PC-9 (cell line): ENCODE measurements at regions of chr14 and their contacts with region 1.

Region 1: DNA sequence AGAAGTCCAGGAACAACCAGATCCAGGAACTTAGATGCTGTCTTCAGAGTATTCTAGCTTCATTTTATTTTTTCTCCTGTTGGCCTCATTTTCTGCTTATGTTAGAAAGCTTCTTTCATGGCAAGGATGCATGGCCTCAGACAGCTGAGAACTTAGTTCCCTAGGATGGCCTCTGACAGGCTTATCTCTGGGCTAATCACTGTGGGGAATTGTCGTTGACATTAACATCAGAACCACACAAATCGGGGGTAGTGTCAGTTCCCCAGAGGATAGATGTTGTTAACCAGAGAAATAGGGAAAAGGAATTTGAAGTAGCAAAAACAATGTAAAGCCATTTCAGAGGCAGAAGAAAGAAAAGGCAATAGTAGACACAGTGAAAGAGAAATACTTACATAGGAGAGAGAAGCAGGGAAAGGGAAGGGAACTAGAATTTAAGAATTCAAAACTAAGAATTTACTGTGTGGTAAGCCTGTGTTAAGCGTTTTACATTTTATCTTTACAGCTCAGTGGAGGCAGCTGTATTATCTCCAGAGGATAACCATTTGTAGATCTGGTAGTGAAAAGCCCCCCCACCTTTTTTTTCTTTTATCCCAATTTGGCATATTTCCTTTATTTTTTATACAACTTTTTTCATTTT is 21.8 kb downstream of the FUT8 start:
- DNase-seq: peak in 1 of 2 experiments; percentile 32
- H3K4me3 ChIP-seq: no peak overlapping the region
- H3K27ac ChIP-seq: peak overlapping the region; percentile 2; the same call in 1 of the 2 replicates
- H3K4me1 ChIP-seq: peaks cover 20% of the 10 kb centered on the region
- H3K27me3 ChIP-seq: no peaks in the 10 kb centered on the region
- CTCF ChIP-seq: no peak

Region 2: DNA sequence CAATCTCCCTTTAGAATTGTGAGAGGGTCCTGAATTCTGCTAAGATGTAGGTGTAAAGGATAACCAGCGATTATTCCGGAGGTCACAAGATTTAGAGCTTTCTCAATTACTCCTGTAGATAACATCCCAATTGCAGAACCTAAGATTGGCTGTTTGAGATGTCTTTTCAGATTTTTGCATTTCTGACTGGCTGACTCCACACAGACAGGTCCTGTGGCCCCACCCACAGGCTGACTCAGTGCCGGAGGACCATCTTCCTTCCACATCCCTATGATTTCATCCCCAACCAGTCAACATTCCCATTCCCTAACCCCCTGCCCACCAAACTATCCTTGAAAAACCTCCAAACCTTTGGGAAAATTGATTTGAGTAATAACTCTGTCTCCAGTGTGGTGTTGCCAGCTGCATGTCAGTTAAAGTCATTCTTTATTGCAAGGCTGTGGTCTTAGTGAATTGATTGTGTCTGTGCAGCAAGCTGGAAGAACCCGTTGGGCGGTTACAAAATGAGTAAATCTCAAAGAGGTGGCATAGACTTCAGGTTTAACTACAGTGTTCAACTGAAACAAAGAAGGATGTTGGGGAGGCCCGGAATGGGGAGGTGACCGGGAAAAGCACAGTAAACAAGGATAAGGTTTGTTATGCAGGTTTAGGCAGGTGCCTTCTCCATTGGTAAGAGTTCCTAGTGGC is 437.1 kb before region 1 on chr14:
- CTCF ChIA-PET with region 1: no interaction called
- POLR2A ChIA-PET with region 1: interaction called, 10 read pairs
- intact Hi-C with region 1: no loop called
- DNase-seq: peak; percentile 74 to 94
- H3K4me3 ChIP-seq: peak overlapping the region; percentile 31; the same call in 1 of the 2 replicates
- H3K27ac ChIP-seq: peak overlapping the region; percentile 98
- H3K4me1 ChIP-seq: peaks cover 46% of the 10 kb centered on the region
- H3K27me3 ChIP-seq: no peaks in the 10 kb centered on the region
- CTCF ChIP-seq: no peak

Region 3: DNA sequence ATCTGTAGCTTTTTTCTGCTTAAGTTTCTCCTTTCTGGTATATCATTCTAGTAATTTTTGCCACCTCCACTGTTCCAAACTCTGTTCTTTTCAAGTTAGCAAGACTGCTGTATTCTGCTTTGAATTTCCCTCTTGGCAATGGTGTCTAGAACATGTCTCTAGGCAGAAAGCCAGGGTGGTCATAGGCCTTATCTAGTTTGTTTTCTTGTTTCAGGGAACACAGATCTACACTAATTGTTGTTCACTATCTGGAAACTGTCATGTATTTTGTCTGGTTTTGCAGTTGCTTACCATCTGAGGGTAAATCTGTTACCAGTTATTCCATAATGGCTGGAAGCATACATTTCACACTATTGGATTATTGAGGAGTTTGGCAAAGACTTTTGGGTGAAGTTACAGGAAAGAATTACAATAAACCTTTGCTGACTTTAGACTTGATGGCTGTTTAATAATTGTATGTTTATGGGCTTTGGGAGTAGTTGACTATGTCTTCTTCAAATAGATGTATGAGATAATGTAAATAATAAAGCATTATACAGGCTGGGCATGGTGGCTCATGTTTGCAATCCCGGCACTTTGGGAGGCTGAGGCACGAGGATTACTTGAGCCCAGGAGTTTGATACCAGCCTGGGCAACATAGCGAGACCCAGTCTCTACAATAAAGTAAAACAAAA is 19.6 kb after region 1 on chr14:
- CTCF ChIA-PET with region 1: no interaction called
- POLR2A ChIA-PET with region 1: interaction called, 11 read pairs
- intact Hi-C with region 1: no loop called
- DNase-seq: no peak
- H3K4me3 ChIP-seq: no peak overlapping the region
- H3K27ac ChIP-seq: 0 out of 2 replicates have a peak overlapping the region, but pooled peaks have one; percentile 7
- H3K4me1 ChIP-seq: no peaks in the 10 kb centered on the region
- H3K27me3 ChIP-seq: no peaks in the 10 kb centered on the region
- CTCF ChIP-seq: no peak